Mammary epithelial cell (primary cell): ENCODE measurements at regions of chr4 and their contacts with region 1.

Region 1: DNA sequence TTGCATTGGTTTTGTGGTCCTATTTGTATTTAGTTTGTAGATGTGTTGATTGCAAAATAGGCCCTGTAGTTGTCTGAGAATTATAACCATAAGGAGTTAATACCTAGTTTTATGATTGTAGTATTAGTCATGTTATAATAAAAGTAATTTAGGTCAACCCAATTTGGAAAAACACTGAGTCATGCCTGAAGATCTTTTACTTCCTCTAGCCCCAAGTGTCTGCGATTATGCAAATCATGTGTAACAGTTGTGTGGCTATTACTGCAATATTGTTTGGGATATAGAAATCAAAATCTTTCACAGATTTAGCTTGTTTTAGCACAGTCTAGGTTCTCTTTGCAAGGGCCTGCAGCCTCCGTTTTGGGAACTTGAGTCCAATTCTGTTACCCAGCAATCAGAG is 12.6 kb downstream of the SRD5A3 start:
- DNase-seq: peak; percentile 83
- H3K4me3 ChIP-seq: no peak overlapping the region
- H3K27ac ChIP-seq: no peak overlapping the region
- H3K4me1 ChIP-seq: peaks cover 25% of the 10 kb centered on the region
- H3K27me3 ChIP-seq: no peaks in the 10 kb centered on the region
- CTCF ChIP-seq: no peak

Region 2: GRCh38 chr4:55069248-55069647 is 289.4 kb before region 1 on chr4:
- CTCF ChIA-PET with region 1: no interaction called
- dilution Hi-C with region 1: no loop called
- in situ Hi-C with region 1: no loop called
- intact Hi-C with region 1: no loop called
- DNase-seq: no peak
- H3K4me3 ChIP-seq: no peak overlapping the region
- H3K27ac ChIP-seq: no peak overlapping the region
- H3K4me1 ChIP-seq: no peaks in the 10 kb centered on the region
- H3K27me3 ChIP-seq: no peaks in the 10 kb centered on the region
- CTCF ChIP-seq: no peak

Region 3: GRCh38 chr4:55378617-55379463 is 20.2 kb after region 1 on chr4:
- CTCF ChIA-PET with region 1: no interaction called
- dilution Hi-C with region 1: no loop called
- in situ Hi-C with region 1: no loop called
- intact Hi-C with region 1: loop called (anchors 1 kb)
- DNase-seq: peak; percentile 79
- H3K4me3 ChIP-seq: no peak overlapping the region
- H3K27ac ChIP-seq: peak overlapping the region; percentile 48
- H3K4me1 ChIP-seq: peaks cover 12% of the 10 kb centered on the region
- H3K27me3 ChIP-seq: no peaks in the 10 kb centered on the region
- CTCF ChIP-seq: no peak

Region 4: GRCh38 chr4:55395529-55396307 is 37.0 kb after region 1 on chr4 and contains the start of gene TMEM165:
- CTCF ChIA-PET with region 1: no interaction called
- dilution Hi-C with region 1: no loop called
- in situ Hi-C with region 1: loop called in 1 of 2 experiments (anchors 5 kb)
- intact Hi-C with region 1: loop called (anchors 1 kb)
- DNase-seq: peak; percentile 93
- H3K4me3 ChIP-seq: peak within 1 kb of the TSS; percentile 74 to 96 (median 85)
- H3K27ac ChIP-seq: peak within 1 kb of the TSS; percentile 89
- H3K4me1 ChIP-seq: peaks cover 17% of the 10 kb centered on the region
- H3K27me3 ChIP-seq: no peaks in the 10 kb centered on the region
- CTCF ChIP-seq: no peak
- total RNA-seq, gene TMEM165: 101 to 121 TPM